ENCODE measurements at regions of chr10 and their contacts with region 1.

Region 1: DNA sequence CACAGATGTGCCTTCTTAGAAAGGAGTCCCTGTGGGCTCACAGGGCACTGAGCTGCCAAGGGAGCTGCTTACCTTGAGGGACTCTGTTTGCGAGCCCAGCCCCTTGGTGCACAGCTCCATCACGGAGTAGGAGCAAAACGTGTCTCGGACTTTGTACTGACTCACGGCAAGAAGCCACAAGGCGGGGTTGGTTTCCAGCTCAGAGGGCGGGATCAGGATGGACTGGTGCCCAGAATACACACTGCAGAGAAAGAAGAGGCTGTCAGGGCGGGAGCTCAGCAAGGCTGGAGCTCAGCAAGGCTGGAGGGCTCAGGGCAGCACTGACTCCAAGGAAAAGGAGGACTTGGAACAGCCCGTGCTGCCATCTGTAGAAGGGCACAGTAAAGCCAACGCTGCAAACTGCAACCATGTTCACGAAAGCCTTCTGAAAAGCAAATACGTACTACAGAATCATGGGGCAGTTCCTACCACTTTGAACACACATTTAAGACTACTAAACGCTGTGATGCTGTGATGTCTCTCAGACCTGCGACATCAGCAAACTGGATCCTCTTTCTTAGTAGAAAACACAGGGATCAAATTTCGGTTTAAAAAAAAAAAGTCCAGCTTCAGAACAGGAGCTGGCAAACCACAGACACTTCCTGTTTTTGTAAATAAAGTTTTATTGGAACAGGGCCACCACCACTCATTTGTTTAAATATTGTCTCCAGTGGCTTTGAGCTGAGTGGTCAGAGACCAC is 194.3 kb downstream of the ZMYND11 start:
- DNase-seq: peak; percentile 71
- ATAC-seq: peak; percentile 85
- H3K4me3 Mint-ChIP-seq: peak overlapping the region; percentile 67
- H3K27ac Mint-ChIP-seq: peak overlapping the region; percentile 78
- H3K4me1 Mint-ChIP-seq: peaks cover 40% of the 10 kb centered on the region
- H3K27me3 Mint-ChIP-seq: no peaks in the 10 kb centered on the region
- CTCF ChIP-seq: no peak

Region 2: GRCh38 chr10:451021-451471 is 121.5 kb after region 1 on chr10:
- CTCF ChIA-PET with region 1: no interaction called
- POLR2A ChIA-PET with region 1: no interaction called
- intact Hi-C with region 1: loop called (anchors 10 kb)
- DNase-seq: peak; percentile 83
- ATAC-seq: peak; percentile 95
- H3K4me3 Mint-ChIP-seq: peak overlapping the region; percentile 66
- H3K27ac Mint-ChIP-seq: peak overlapping the region; percentile 56
- H3K4me1 Mint-ChIP-seq: peaks cover 50% of the 10 kb centered on the region
- H3K27me3 Mint-ChIP-seq: no peaks in the 10 kb centered on the region
- CTCF ChIP-seq: no peak